ENCODE measurements at regions of chr19 and their contacts with region 1.

Region 1: DNA sequence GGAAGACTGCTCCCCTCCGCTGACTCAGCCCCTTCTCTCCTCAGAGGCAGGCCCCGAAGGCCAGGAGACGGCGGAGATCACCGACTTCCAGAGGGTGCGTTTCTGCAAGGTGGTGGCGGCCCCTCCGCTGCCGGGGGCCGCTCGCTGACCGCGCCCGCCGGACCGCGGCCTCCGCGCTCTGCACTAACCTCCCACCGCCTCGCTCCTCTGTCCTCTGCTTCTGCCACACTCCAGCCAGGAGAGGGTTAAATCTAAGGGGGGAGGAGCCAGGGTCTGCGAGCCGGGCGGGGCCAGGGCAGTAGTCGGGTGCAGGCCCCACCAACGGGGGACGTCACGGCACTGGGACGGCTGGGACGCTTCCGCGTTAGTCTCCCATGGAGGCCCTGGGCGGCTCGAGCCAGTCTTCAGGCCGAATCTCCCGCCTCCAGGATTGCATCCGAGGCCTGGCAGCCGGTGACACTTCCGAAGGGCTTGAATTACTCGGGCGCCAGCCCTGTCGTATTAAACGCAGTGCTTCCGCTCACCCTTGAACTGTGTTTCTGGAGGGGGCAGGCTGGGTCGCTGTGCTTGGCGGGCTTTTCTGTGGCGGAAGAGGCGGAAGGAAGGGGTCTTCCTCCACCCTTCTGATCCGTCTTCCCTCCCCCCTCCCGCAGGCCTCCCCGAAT is 1.2 kb upstream of the INAFM1 start:
- DNase-seq: peak; percentile 94
- ATAC-seq: peak; percentile 77
- H3K4me3 Mint-ChIP-seq: peak overlapping the region; percentile 86
- H3K27ac Mint-ChIP-seq: peak overlapping the region; percentile 93
- H3K4me1 Mint-ChIP-seq: peaks cover 22% of the 10 kb centered on the region
- H3K27me3 Mint-ChIP-seq: no peaks in the 10 kb centered on the region

Region 2: DNA sequence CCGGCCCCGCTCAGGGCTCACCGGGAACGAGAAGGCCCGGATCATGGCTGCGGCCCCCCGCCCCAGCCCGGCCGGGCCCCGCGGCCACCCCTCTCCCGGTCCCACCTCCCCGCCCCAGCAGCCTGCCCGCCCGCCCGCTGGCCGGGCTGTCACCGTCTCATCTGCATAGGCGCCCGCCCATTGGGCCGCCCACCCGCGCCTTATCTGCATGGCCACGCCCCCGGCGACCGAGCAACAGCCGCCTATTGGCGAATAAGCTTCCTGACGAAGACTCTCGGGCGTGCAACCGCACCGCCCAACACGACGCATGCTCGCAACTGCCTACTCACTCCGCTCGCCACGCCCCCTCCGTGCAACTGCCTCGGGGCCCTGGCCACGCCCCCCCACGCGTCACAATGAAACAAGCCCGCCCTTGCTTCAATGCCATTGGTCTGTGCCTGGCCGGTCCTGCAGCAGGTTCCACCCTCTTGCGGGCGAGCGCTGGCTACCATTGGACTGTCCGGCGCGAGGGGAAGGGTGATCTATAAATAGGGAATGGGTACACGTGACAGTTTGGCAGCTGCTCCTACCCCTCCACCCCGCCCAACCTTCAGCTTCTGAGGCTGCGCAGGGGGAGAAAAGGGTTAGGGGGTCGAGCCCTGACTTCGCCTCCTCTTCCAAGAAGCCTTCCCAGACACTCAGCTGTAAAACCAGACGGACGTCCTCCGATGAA is 612.3 kb before region 1 on chr19 and contains the start of gene DACT3:
- CTCF ChIA-PET with region 1: no interaction called
- POLR2A ChIA-PET with region 1: no interaction called
- intact Hi-C with region 1: loop called in 1 of 2 experiments (anchors 2 kb)
- DNase-seq: peak; percentile 100
- ATAC-seq: peak; percentile 87
- H3K4me3 Mint-ChIP-seq: peak within 1 kb of the TSS; percentile 66
- H3K27ac Mint-ChIP-seq: peak within 1 kb of the TSS; percentile 62
- H3K4me1 Mint-ChIP-seq: peaks cover 28% of the 10 kb centered on the region
- H3K27me3 Mint-ChIP-seq: peaks cover 12% of the 10 kb centered on the region
- total RNA-seq, gene DACT3: 2.9 to 3.1 TPM

Region 3: DNA sequence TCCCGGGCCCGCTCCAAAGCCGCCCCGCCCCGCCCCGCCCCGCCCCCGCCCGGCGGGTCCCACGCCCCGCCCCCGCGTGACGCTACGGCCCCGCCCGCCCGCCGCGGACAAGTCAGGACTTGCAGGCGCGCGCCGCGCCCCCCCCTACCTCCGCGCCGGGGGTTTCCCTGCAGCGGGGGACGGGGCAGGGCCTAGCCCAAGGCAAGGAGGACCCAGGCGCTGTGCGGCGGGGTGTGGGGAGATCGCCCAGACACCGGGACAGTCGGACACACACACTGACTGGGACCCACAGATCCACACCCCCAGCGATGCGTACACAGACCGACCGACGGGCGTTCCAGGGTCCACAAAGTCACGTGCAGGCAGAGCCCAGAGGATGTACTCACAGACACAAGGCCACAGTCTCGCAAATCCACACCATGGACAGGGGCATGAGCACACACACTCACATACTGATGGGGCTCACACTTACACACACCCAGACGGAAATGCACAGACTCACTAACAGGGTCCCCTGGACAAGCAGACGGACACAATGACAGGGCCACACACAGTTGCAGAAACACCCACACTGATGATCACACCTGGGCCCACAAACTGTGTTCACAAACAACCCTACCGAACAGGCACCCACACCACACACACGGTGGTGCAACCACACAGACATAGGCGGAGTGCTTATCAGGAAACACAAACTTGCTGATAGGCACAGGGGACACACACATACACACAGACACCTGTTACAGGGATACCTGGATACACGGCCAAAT is 42.0 kb before region 1 on chr19:
- CTCF ChIA-PET with region 1: interaction called, 4 read pairs
- POLR2A ChIA-PET with region 1: no interaction called
- intact Hi-C with region 1: loop called in 1 of 2 experiments (anchors 1 kb)
- DNase-seq: peak; percentile 95
- ATAC-seq: peak; percentile 63
- H3K4me3 Mint-ChIP-seq: peak overlapping the region; percentile 61
- H3K27ac Mint-ChIP-seq: peak overlapping the region; percentile 71
- H3K4me1 Mint-ChIP-seq: peaks cover 30% of the 10 kb centered on the region
- H3K27me3 Mint-ChIP-seq: no peaks in the 10 kb centered on the region

Region 4: GRCh38 chr19:47381653-47382279 is 108.3 kb after region 1 on chr19:
- CTCF ChIA-PET with region 1: no interaction called
- POLR2A ChIA-PET with region 1: no interaction called
- intact Hi-C with region 1: no loop called
- DNase-seq: peak; percentile 22
- ATAC-seq: no peak
- H3K4me3 Mint-ChIP-seq: no peak overlapping the region
- H3K27ac Mint-ChIP-seq: peak overlapping the region; percentile 43
- H3K4me1 Mint-ChIP-seq: peaks cover 13% of the 10 kb centered on the region
- H3K27me3 Mint-ChIP-seq: no peaks in the 10 kb centered on the region

Region 5: DNA sequence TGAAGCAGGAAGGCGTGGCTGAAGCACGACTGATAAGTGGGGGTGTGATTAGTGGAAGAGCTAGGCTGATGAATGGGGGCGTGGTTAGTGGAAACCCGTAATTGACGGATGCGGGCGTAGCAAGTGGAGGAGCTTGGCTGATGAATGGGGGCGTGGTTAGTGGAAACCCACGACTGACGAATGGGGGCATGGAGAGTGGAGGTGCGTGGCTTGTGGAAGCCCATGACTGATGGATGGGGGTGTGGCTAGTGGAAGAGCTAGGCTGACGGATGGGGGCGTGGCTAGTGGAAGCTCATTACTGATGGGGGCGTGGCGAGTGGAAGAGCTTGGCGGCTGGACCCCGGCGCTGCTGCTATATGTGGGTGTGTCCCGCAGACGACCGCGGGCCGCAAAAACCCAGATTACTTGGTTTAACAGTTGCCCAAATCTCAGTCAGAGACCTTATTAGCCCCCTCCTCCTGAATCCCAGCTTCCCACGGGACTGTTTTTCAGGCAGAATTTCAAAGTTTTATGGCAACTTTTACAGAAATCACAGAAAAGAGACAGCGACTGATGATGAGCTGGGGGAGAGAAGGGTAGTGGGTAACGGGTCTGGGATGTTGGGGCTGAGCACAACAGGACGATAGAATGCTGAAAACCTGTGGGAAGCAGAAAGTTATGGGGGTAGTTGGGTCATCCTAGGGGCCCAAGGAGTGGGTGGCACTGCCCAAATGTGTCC is 154.9 kb after region 1 on chr19:
- CTCF ChIA-PET with region 1: interaction called, 16 read pairs
- POLR2A ChIA-PET with region 1: interaction called, 6 read pairs
- intact Hi-C with region 1: loop called in 1 of 2 experiments (anchors 1 kb)
- DNase-seq: peak; percentile 94
- ATAC-seq: peak; percentile 75
- H3K4me3 Mint-ChIP-seq: no peak overlapping the region
- H3K27ac Mint-ChIP-seq: no peak overlapping the region
- H3K4me1 Mint-ChIP-seq: peaks cover 13% of the 10 kb centered on the region
- H3K27me3 Mint-ChIP-seq: peaks cover 39% of the 10 kb centered on the region

Region 6: GRCh38 chr19:47464675-47465419 is 191.4 kb after region 1 on chr19:
- CTCF ChIA-PET with region 1: no interaction called
- POLR2A ChIA-PET with region 1: no interaction called
- intact Hi-C with region 1: no loop called
- DNase-seq: no peak
- ATAC-seq: no peak
- H3K4me3 Mint-ChIP-seq: no peak overlapping the region
- H3K27ac Mint-ChIP-seq: no peak overlapping the region
- H3K4me1 Mint-ChIP-seq: peaks cover 3% of the 10 kb centered on the region
- H3K27me3 Mint-ChIP-seq: peaks cover 27% of the 10 kb centered on the region

Region 7: DNA sequence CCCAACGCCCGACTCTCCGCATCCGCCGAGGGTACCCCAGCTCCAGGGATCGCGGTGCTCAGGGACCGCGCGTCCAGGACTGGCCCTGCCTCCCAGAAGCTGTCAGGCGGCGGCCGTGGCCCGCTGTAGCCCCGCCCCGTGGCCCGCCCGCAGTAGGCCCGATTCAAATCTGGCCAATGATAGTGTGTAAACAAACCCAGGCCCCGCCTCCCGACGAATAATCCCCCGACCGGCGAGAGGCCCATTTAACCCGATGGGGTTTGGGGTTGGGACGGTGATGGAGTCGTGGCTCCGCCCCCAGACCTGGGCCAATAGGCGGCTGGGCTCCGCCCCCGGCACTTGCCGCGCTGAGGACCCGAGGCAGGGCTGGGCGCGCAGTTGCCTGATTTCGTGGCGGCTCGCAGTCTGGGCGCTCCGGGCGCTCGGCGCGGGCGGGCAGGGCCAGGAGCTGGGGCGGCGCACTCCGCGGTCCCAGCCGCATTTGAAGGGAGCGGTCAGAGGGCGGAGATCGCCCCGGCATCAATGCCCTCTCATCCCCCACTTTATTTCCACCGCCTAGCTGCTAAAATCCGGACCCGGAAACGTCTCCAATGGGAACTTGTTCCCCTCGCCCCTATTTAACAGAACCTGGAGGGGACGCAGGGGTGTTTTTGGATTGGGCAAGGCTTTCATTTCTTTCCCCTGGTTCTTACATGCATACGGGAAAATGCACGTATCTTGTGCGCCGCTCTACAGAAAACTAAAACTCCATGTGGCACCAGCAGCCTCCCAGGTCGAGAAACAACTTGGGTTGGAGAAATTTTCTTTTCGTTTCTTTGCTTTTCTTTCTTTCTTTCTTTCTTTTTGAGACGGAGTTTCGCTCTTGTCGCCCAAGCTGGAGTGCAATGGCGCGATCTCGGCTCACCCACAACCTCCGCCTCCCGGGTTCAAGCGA is 327.1 kb after region 1 on chr19:
- CTCF ChIA-PET with region 1: no interaction called
- POLR2A ChIA-PET with region 1: no interaction called
- intact Hi-C with region 1: loop called in 1 of 2 experiments (anchors 1 kb)
- DNase-seq: peak; percentile 100
- ATAC-seq: peak; percentile 98
- H3K4me3 Mint-ChIP-seq: peak overlapping the region; percentile 79
- H3K27ac Mint-ChIP-seq: peak overlapping the region; percentile 89
- H3K4me1 Mint-ChIP-seq: peaks cover 31% of the 10 kb centered on the region
- H3K27me3 Mint-ChIP-seq: no peaks in the 10 kb centered on the region

Region 8: GRCh38 chr19:48492925-48493717 is 1219.7 kb after region 1 on chr19:
- CTCF ChIA-PET with region 1: no interaction called
- POLR2A ChIA-PET with region 1: no interaction called
- intact Hi-C with region 1: loop called in 1 of 2 experiments (anchors 5 kb)
- DNase-seq: peak; percentile 98
- ATAC-seq: peak; percentile 81
- H3K4me3 Mint-ChIP-seq: peak overlapping the region; percentile 68
- H3K27ac Mint-ChIP-seq: peak overlapping the region; percentile 42
- H3K4me1 Mint-ChIP-seq: peaks cover 30% of the 10 kb centered on the region
- H3K27me3 Mint-ChIP-seq: peaks cover 39% of the 10 kb centered on the region

Measured in activated CD4-positive, alpha-beta T cell treated with anti-CD3 and anti-CD28 coated beads for 36 hours (primary cell).